HCT116 (cell line): ENCODE measurements at regions of chr6 and their contacts with region 1.

Region 1: DNA sequence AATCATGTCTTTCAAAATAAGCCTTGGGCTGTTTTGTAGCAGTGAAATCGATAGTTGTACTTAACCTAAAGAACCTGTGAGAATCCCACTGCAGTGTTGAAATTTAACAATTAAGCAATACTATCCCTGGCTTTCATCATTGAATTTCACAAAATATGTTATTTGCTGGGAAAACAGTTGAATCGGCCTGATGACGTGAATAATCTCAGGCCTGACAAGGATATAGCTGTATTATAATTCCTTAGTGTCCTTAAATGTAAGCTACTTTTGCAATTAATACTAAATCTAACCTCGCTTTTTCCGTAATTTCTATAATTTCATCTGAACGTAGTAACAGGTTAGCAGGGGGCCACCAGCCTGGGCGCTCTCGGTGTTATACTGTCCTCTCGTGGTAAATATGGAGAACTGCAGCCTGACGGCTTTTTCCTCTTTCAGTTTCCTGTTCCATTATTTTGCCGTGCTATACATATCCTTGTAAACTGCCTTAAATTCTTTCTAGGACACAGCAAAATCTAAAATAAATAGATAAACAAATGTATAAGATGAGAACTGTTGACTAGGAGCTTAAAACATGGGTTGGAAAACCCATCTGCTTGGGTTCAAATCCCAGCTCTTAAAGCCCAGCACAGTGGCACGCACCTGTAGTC is 24.0 kb downstream of the MTFR2 start:
- DNase-seq: peak; percentile 36
- ATAC-seq: peak; percentile 89
- H3K4me3 ChIP-seq: peak overlapping the region in 1 of 2 experiments; percentile 23; a peak in 1 of 4 replicates
- H3K27ac ChIP-seq: no peak overlapping the region
- H3K4me1 ChIP-seq: peaks cover 0 to 7% of the 10 kb centered on the region in 2 experiments; a peak in 1 of 4 replicates
- H3K27me3 ChIP-seq: no peaks in the 10 kb centered on the region
- CTCF ChIP-seq: peak; percentile 93 to 100 (median 99)
- POLR2A ChIP-seq: no peak
- RAD21 ChIP-seq: peak; percentile 99

Region 2: GRCh38 chr6:135506270-135506997 is 719.7 kb before region 1 on chr6:
- CTCF ChIA-PET with region 1: interaction called, 11 read pairs
- POLR2A ChIA-PET with region 1: no interaction called
- RAD21 ChIA-PET with region 1: no interaction called
- intact Hi-C with region 1: loop called (anchors 1 kb)
- DNase-seq: no peak
- ATAC-seq: peak; percentile 75
- H3K4me3 ChIP-seq: no peak overlapping the region
- H3K27ac ChIP-seq: no peak overlapping the region
- H3K4me1 ChIP-seq: no peaks in the 10 kb centered on the region
- H3K27me3 ChIP-seq: no peaks in the 10 kb centered on the region
- CTCF ChIP-seq: peak; percentile 35 to 69 (median 46); a peak in 4 of 6 replicates
- POLR2A ChIP-seq: no peak
- RAD21 ChIP-seq: peak; percentile 70

Region 3: DNA sequence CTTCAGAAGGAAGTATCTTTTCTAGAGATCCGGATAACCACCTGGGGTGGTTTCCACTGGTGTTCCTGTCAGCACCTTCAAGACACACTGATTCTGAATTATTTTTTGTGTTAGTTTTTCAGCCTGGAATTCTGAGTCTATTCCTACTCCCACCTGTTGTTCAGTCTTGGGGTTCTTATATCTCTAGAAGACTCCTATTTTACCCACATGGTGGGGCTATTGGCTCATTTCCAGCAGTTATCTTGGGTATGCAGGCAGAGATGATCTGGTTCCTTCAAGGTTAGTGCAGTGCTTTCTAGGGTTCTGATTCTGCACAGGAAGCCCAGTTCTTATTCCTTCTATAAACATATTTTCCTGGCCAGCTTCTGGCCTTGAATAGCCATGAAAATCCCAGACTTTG is 550.3 kb before region 1 on chr6:
- CTCF ChIA-PET with region 1: interaction called, 5 read pairs
- POLR2A ChIA-PET with region 1: no interaction called
- RAD21 ChIA-PET with region 1: no interaction called
- intact Hi-C with region 1: loop called (anchors 1 kb)
- DNase-seq: peak; percentile 23
- ATAC-seq: peak; percentile 59; the same call in 1 of the 2 replicates
- H3K4me3 ChIP-seq: no peak overlapping the region
- H3K27ac ChIP-seq: no peak overlapping the region
- H3K4me1 ChIP-seq: no peaks in the 10 kb centered on the region
- H3K27me3 ChIP-seq: no peaks in the 10 kb centered on the region
- CTCF ChIP-seq: peak in 2 of 3 experiments; percentile 41; a peak in 3 of 6 replicates
- POLR2A ChIP-seq: no peak
- RAD21 ChIP-seq: peak; percentile 70

Region 4: DNA sequence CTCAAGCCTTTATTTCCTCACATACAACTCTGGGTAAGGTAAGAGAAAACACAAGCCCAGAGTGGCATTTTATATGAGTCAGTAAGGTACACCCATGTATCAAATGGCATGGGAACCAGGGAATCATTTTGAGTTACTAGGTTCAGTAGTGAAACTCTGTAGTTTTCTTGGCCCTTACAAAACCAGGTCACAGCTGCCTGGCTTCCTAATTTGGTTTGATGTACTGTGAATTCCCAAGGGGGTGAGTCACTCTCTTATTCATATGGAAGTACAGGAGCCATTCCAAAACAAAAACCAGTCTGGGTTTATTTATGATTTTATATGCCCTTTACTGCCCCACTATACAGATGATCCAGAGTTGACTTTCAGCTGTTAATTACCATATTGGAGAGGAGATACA is 304.0 kb before region 1 on chr6:
- CTCF ChIA-PET with region 1: no interaction called
- POLR2A ChIA-PET with region 1: no interaction called
- RAD21 ChIA-PET with region 1: no interaction called
- intact Hi-C with region 1: loop called (anchors 5 kb)
- DNase-seq: peak; percentile 29
- ATAC-seq: peak; percentile 66
- H3K4me3 ChIP-seq: no peak overlapping the region
- H3K27ac ChIP-seq: no peak overlapping the region
- H3K4me1 ChIP-seq: peaks cover 8 to 11% of the 10 kb centered on the region in 2 experiments
- H3K27me3 ChIP-seq: no peaks in the 10 kb centered on the region
- CTCF ChIP-seq: no peak
- POLR2A ChIP-seq: no peak
- RAD21 ChIP-seq: no peak

Region 5: GRCh38 chr6:136306466-136306865 is 80.3 kb after region 1 on chr6:
- CTCF ChIA-PET with region 1: no interaction called
- POLR2A ChIA-PET with region 1: no interaction called
- RAD21 ChIA-PET with region 1: no interaction called
- intact Hi-C with region 1: no loop called
- DNase-seq: no peak
- ATAC-seq: no peak
- H3K4me3 ChIP-seq: no peak overlapping the region
- H3K27ac ChIP-seq: no peak overlapping the region
- H3K4me1 ChIP-seq: no peaks in the 10 kb centered on the region
- H3K27me3 ChIP-seq: no peaks in the 10 kb centered on the region
- CTCF ChIP-seq: no peak
- POLR2A ChIP-seq: no peak
- RAD21 ChIP-seq: no peak